OCI-LY7 (cell line): ENCODE measurements at regions of chr2 and their contacts with region 1.

Region 1: GRCh38 chr2:238106686-238107524 is 6.8 kb downstream of the ESPNL start:
- DNase-seq: peak; percentile 75
- H3K4me3 ChIP-seq: peak overlapping the region; percentile 66
- H3K27ac ChIP-seq: peak overlapping the region; percentile 88
- H3K4me1 ChIP-seq: peaks cover 48% of the 10 kb centered on the region
- CTCF ChIP-seq: peak; percentile 74

Region 2: DNA sequence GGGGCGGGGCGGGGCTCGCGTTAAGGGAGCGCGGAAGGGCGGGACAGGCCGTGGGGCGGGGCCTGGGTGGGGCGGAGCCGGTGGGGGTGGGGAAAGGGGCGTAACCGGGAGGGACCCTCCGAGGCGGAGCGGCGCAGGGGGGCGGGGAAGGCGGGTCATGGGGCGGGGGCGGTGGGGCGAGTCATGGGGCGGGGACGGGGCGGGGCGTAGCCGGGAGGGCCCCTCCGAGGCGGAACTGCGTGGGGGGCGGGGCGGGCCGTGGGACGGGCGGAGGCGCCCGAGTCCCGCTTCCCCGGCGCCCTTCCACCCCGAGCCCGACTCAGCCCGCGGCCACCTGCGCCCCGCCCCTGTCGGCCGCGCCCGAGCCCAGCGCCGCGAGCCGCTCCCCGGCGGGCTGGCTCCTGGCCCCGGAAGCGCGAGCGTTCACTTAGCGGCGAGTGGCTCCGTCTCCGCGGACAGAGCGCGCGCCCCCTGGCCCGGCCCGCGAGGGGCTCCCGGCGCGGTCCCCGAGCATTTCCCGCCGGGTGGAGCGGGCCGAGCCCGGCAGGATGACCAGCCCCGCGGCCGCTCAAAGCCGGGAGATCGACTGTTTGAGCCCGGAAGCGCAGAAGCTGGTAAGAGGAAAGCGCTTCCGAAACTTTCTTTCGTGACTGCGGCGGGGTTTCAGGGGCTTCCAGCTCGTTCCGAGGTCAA is 414.9 kb before region 1 on chr2:
- CTCF ChIA-PET with region 1: no interaction called
- POLR2A ChIA-PET with region 1: no interaction called
- intact Hi-C with region 1: loop called (anchors 5 kb)
- DNase-seq: peak; percentile 92
- H3K4me3 ChIP-seq: peak overlapping the region; percentile 91
- H3K27ac ChIP-seq: peak overlapping the region; percentile 99
- H3K4me1 ChIP-seq: peaks cover 49% of the 10 kb centered on the region
- CTCF ChIP-seq: no peak

Region 3: GRCh38 chr2:237966565-237967462 is 140.1 kb before region 1 on chr2 and contains the start of gene UBE2F:
- CTCF ChIA-PET with region 1: no interaction called
- POLR2A ChIA-PET with region 1: interaction called, 3 read pairs
- intact Hi-C with region 1: loop called (anchors 2 kb)
- DNase-seq: peak; percentile 98
- H3K4me3 ChIP-seq: peak within 1 kb of the TSS; percentile 83
- H3K27ac ChIP-seq: no peak within 1 kb of the TSS
- H3K4me1 ChIP-seq: peaks cover 25% of the 10 kb centered on the region
- CTCF ChIP-seq: no peak
- total RNA-seq, gene UBE2F: 18.1 and 19.9 TPM in 2 replicates

Region 4: GRCh38 chr2:238139196-238140039 is 32.5 kb after region 1 on chr2:
- CTCF ChIA-PET with region 1: interaction called, 4 read pairs
- POLR2A ChIA-PET with region 1: interaction called, 6 read pairs
- intact Hi-C with region 1: loop called (anchors 1 kb)
- DNase-seq: peak; percentile 55
- H3K4me3 ChIP-seq: peak overlapping the region; percentile 22
- H3K27ac ChIP-seq: no peak overlapping the region
- H3K4me1 ChIP-seq: peaks cover 16% of the 10 kb centered on the region
- CTCF ChIP-seq: peak; percentile 89

Region 5: DNA sequence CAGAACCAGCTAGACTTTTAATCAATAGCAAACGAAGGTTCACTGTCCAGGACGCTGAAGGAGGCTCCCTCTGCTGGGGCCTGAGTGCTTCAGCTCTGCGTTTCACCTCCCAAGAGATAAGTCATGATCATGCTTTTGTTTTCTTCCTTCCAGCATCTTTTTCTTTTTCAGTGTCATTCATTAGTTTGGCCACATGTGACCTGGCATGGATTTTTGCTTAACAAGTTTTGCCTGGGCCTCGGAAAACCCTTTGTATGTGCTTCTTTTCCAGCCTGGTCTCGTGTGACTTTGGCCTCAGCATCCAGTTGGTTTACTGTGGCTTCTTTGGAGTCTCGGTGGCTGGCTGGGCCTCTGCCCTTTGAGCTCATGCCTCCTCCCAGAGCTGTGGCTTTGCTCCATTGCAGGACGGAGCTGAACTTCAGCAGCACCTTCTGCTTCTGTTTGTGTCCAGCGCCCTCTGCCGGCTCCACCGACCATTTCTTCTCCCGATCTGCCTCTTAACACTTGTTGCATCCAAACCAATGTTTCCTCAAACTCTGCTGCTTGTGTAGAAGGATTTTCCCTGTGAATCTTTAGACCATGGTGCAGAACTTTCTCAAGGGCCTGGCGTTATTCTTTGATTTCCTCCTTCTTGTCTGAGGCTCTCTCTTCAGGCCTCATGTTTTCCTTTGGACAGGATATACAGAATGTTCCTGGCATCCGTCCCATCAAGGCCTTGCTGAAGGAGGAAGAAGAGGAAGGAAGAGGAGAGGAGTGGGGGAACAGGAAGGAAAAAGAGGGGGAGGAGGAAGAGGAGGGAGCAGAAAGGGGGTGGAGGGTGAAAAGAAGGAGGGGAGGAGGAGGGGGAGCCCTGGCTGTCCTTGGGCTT is 156.5 kb after region 1 on chr2:
- CTCF ChIA-PET with region 1: no interaction called
- POLR2A ChIA-PET with region 1: no interaction called
- intact Hi-C with region 1: no loop called
- DNase-seq: peak; percentile 78
- H3K4me3 ChIP-seq: no peak overlapping the region
- H3K27ac ChIP-seq: no peak overlapping the region
- H3K4me1 ChIP-seq: no peaks in the 10 kb centered on the region
- CTCF ChIP-seq: peak; percentile 95

Region 6: DNA sequence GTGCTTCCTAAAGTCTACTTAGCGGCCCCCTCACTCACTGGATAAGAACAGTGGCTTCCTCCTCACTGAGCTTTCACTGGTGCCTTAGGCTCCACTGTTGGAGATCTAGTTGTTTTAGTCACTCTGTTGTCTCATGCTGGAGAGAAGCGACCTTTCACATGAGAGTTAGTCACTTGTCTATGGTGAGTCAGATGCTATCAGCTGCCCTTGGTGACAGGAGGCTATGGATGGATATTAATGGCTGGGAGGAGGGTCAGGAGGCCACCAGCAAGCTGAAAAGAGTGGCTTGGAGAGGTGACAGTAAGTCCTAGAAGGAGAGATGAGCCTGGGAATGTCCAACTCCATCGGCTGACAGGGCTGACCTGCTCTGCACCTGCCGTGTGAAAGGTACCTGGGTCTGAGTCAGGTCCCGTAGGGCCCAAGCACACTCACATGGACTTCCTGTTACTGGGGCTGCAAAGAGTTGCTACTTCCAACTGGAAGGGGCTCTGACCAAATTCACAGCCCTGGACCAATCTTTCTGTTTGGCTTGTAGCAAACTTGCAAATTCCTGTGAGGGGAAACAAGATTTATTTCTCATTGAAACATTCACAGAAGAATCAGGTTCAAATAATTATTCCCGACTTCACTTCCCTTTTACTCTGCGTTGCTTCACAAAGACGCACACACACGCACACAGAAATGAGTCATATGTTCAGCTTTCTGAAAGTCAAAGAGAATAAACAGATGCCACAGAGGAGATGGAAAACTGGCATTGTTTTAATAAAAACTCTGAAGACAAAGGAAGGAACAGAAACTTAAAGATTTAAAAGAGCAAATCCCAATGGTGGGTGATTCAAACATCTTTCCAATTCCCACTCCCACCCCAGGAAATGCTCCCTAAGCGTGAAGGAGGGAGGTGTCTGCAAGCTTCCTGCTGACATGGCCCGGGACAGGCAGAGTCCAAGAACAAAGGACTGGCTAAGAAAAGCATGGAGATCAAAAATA is 537.5 kb after region 1 on chr2:
- CTCF ChIA-PET with region 1: no interaction called
- POLR2A ChIA-PET with region 1: no interaction called
- intact Hi-C with region 1: no loop called
- DNase-seq: no peak
- H3K4me3 ChIP-seq: no peak overlapping the region
- H3K27ac ChIP-seq: no peak overlapping the region
- H3K4me1 ChIP-seq: no peaks in the 10 kb centered on the region
- CTCF ChIP-seq: no peak